H1 (cell line): ENCODE measurements at regions of chr9 and their contacts with region 1.

Region 1: DNA sequence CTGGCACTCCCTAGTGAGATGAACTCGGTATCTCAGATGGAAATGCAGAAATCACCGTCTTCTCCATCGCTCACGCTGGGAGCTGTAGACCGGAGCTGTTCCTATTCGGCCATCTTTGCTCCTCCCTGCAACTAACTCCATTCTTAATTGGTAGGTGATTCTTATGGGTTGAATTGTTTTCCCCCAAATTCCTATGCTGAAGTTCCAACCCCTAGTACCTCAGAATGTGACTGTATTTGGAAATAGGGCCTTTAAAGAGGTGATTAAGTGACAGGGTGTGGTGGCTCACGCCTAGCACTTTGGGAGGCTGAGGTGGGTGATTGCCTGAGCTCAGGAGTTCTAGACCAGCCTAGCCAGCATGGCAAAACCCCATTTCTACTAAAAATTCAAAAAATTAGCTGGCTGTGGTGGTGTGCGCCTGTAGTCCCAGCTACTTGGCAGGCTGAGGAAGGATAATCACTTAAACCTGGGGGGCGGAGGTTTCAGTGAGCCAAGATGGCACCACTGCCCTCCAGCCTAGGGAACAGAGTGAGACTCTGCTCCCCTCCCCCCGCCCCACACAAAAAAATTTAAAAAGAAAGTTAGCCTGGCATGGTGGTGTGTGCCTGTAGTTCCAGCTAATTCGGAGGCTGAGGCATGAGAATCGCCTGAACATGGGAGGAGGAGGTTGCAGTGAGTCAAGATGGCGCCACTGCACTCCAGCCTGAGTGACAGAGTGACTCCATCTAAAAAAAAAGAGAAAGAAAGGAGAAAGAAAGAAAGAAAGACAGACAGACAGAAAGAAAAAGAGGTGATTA is 25.2 kb upstream of the FOCAD start:
- DNase-seq: no peak
- H3K4me3 ChIP-seq: peak overlapping the region; percentile 69 to 79 (median 71)
- H3K27ac ChIP-seq: peak overlapping the region; percentile 68
- H3K4me1 ChIP-seq: peaks cover 0 to 16% (median 2%) of the 10 kb centered on the region in 4 experiments; a peak in 3 of 7 replicates
- H3K27me3 ChIP-seq: no peaks in the 10 kb centered on the region
- CTCF ChIP-seq: no peak
- EP300 ChIP-seq: no peak
- POLR2A ChIP-seq: no peak
- RAD21 ChIP-seq: no peak

Region 2: GRCh38 chr9:20604562-20604961 is 54.3 kb before region 1 on chr9:
- CTCF ChIA-PET with region 1: no interaction called
- POLR2A ChIA-PET with region 1: no interaction called
- DNase-seq: no peak
- H3K4me3 ChIP-seq: no peak overlapping the region
- H3K27ac ChIP-seq: no peak overlapping the region
- H3K4me1 ChIP-seq: no peaks in the 10 kb centered on the region; a peak in 1 of 7 replicates
- H3K27me3 ChIP-seq: no peaks in the 10 kb centered on the region
- CTCF ChIP-seq: no peak
- EP300 ChIP-seq: no peak
- POLR2A ChIP-seq: no peak
- RAD21 ChIP-seq: no peak

Region 3: DNA sequence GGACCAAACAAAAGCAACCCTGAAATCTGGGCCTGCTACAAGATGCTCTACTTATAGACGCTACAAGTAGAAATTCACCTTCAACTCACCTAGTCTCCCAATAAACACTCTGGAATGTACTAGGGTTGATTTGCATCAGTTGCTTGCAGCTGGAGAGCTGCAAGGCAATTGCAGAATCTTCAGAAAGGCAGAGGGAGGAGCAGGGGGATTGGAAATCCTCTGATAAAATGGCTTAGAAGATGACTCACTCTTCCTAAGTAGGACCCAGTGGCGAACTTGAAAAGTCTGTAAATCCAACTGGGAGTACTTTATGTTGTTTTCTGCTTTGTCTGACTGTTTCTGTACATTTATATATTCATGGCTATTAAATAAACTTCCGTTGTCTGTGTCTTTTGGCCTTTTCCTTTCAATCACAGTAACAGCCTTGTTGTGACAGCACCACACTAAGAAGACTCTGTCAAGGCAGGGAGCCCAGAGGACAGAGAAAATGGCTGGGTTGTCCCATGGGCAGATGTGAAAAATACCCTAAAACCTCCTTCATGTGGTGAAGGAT is 21.9 kb before region 1 on chr9:
- CTCF ChIA-PET with region 1: interaction called, 4 read pairs
- POLR2A ChIA-PET with region 1: interaction called, 16 read pairs
- DNase-seq: no peak
- H3K4me3 ChIP-seq: no peak overlapping the region
- H3K27ac ChIP-seq: no peak overlapping the region
- H3K4me1 ChIP-seq: peaks cover 0 to 4% (median 4%) of the 10 kb centered on the region in 4 experiments; a peak in 4 of 7 replicates
- H3K27me3 ChIP-seq: no peaks in the 10 kb centered on the region
- CTCF ChIP-seq: no peak
- EP300 ChIP-seq: no peak
- POLR2A ChIP-seq: no peak
- RAD21 ChIP-seq: no peak

Region 4: GRCh38 chr9:20670395-20670794 is 11.5 kb after region 1 on chr9:
- CTCF ChIA-PET with region 1: interaction called, 6 read pairs
- POLR2A ChIA-PET with region 1: interaction called, 15 read pairs
- DNase-seq: no peak
- H3K4me3 ChIP-seq: no peak overlapping the region
- H3K27ac ChIP-seq: no peak overlapping the region
- H3K4me1 ChIP-seq: peaks cover 0 to 2% (median 0%) of the 10 kb centered on the region in 4 experiments; a peak in 1 of 7 replicates
- H3K27me3 ChIP-seq: no peaks in the 10 kb centered on the region
- CTCF ChIP-seq: no peak
- EP300 ChIP-seq: no peak
- POLR2A ChIP-seq: no peak
- RAD21 ChIP-seq: no peak

Region 5: DNA sequence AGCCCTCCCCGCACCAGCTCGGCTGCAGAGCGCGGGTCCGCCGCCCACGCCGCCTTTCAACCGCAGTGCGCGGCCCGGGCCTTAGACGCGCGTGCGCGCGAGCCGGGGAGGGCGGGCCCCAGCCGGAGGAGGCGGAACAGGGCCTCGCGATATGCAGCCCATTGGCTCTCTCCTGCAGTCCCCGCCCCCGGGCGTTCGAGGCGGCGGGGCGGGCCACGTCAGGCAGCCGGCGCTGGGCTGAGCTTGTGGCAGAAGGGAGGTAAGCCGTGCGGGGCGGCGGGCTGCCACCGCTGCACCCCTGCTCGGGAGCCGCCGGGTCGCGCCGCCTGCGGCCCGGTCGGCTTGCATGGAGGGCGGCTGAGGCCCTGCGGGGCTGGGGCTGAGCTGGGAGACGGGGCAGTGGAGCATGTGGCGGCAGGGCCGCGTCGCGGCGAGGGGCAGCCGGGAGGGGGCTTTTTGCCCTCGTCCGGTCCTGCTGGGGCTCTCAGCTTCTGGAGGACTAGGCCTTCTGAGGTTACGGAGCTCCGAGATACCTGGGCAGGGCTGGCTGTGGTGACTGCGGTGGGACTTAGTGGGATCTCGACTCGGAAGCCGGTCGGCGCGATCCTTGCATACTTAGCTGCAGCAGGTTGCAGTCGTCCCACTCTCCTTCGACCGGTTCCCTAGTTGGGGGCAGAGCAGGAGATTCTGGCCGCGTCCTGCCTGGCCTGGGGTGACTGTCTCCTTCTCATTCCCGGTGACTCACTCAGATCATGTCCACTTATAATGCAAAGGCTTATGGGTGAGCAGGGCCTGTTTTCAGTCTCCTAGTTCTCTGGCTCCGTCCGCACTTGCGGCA is 25.4 kb after region 1 on chr9 and contains the start of gene FOCAD:
- CTCF ChIA-PET with region 1: no interaction called
- POLR2A ChIA-PET with region 1: interaction called, 22 read pairs
- DNase-seq: peak; percentile 87 to 96
- H3K4me3 ChIP-seq: peak within 1 kb of the TSS; percentile 64 to 75 (median 70)
- H3K27ac ChIP-seq: peak within 1 kb of the TSS; percentile 61; the same call in 1 of the 2 replicates
- H3K4me1 ChIP-seq: peaks cover 3 to 10% (median 6%) of the 10 kb centered on the region in 4 experiments; a peak in 4 of 7 replicates
- H3K27me3 ChIP-seq: no peaks in the 10 kb centered on the region
- CTCF ChIP-seq: no peak
- EP300 ChIP-seq: no peak
- POLR2A ChIP-seq: peak; percentile 97
- RAD21 ChIP-seq: no peak; a peak in 1 of 4 replicates
- total RNA-seq, gene FOCAD: 36.8 and 38.4 TPM in 2 replicates

Region 6: GRCh38 chr9:20744036-20744630 is 85.3 kb after region 1 on chr9:
- CTCF ChIA-PET with region 1: no interaction called
- POLR2A ChIA-PET with region 1: no interaction called
- DNase-seq: no peak
- H3K4me3 ChIP-seq: no peak overlapping the region
- H3K27ac ChIP-seq: no peak overlapping the region
- H3K4me1 ChIP-seq: peaks cover 0 to 2% (median 0%) of the 10 kb centered on the region in 4 experiments; a peak in 1 of 7 replicates
- H3K27me3 ChIP-seq: no peaks in the 10 kb centered on the region
- CTCF ChIP-seq: no peak
- EP300 ChIP-seq: no peak
- POLR2A ChIP-seq: no peak
- RAD21 ChIP-seq: no peak

Region 7: DNA sequence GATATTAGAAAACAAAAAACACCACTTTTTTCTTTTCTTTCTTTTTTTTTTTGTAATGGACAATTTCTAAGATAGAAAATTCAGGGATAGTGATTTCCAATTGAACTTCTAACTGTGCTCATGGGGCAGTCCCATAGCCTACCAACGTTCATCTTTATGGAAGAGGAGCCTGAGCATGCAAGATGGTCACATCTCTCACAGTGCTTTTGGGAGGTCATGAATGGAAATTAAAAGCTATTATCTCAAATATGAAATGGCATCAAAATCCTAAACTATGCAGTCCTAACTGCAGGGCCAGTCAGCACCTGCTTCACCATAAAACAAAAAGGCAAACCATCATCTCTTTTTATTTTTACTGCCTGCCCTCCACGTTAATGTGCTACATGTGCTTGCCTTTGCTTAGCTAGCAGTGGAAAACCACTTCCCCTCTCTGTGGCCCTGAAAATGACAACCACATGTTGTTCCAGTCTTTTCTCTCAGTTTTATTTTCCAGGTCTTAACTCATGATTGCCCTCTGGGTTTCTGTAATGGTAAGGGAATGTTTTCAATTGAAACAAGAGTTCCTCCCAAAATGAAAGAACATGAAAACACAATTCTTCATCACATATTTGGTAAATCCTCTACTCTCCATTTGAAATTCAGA is 402.2 kb after region 1 on chr9:
- CTCF ChIA-PET with region 1: no interaction called
- POLR2A ChIA-PET with region 1: no interaction called
- DNase-seq: no peak
- H3K4me3 ChIP-seq: no peak overlapping the region
- H3K27ac ChIP-seq: no peak overlapping the region
- H3K4me1 ChIP-seq: no peaks in the 10 kb centered on the region
- H3K27me3 ChIP-seq: no peaks in the 10 kb centered on the region
- CTCF ChIP-seq: no peak
- EP300 ChIP-seq: no peak
- POLR2A ChIP-seq: no peak
- RAD21 ChIP-seq: 0 out of 4 replicates have a peak, but pooled peaks of 1 of the 2 experiments have one; percentile 3